OCI-LY7 (cell line): ENCODE measurements at regions of chr17 and their contacts with region 1.

Region 1: GRCh38 chr17:55388842-55389241 is 32.8 kb downstream of the MMD start:
- DNase-seq: no peak
- H3K4me3 ChIP-seq: no peak overlapping the region
- H3K27ac ChIP-seq: no peak overlapping the region
- H3K4me1 ChIP-seq: peaks cover 7% of the 10 kb centered on the region
- CTCF ChIP-seq: no peak

Region 2: GRCh38 chr17:55324296-55324978 is 64.4 kb before region 1 on chr17:
- CTCF ChIA-PET with region 1: no interaction called
- POLR2A ChIA-PET with region 1: no interaction called
- intact Hi-C with region 1: no loop called
- DNase-seq: peak; percentile 17
- H3K4me3 ChIP-seq: no peak overlapping the region
- H3K27ac ChIP-seq: no peak overlapping the region
- H3K4me1 ChIP-seq: no peaks in the 10 kb centered on the region
- CTCF ChIP-seq: peak; percentile 47

Region 3: DNA sequence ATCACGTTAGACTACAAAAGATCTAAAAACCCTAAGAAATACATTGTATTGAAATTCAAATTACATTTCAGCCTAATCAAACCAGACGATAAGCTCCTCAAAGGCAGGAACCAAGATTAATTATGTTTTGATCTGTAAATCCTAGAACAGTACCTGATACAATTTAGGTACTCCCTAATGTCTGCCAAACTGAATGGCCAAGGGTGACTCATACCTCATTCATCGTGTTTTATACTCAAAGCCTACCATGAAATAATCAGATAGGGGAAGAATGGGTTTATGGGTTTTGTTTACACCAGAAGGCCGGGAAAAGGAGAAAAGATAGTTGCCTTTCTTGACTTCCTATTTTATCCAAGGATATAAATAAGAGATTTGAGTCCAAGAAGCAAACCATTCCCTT is 13.5 kb after region 1 on chr17:
- CTCF ChIA-PET with region 1: no interaction called
- POLR2A ChIA-PET with region 1: interaction called, 12 read pairs
- intact Hi-C with region 1: no loop called
- DNase-seq: no peak
- H3K4me3 ChIP-seq: no peak overlapping the region
- H3K27ac ChIP-seq: no peak overlapping the region
- H3K4me1 ChIP-seq: peaks cover 6% of the 10 kb centered on the region
- CTCF ChIP-seq: no peak

Region 4: GRCh38 chr17:55496094-55496881 is 107.4 kb after region 1 on chr17:
- CTCF ChIA-PET with region 1: no interaction called
- POLR2A ChIA-PET with region 1: no interaction called
- intact Hi-C with region 1: loop called (anchors 5 kb)
- DNase-seq: no peak
- H3K4me3 ChIP-seq: no peak overlapping the region
- H3K27ac ChIP-seq: no peak overlapping the region
- H3K4me1 ChIP-seq: no peaks in the 10 kb centered on the region
- CTCF ChIP-seq: no peak